ENCODE measurements at regions of chr1 and their contacts with region 1.

Region 1: DNA sequence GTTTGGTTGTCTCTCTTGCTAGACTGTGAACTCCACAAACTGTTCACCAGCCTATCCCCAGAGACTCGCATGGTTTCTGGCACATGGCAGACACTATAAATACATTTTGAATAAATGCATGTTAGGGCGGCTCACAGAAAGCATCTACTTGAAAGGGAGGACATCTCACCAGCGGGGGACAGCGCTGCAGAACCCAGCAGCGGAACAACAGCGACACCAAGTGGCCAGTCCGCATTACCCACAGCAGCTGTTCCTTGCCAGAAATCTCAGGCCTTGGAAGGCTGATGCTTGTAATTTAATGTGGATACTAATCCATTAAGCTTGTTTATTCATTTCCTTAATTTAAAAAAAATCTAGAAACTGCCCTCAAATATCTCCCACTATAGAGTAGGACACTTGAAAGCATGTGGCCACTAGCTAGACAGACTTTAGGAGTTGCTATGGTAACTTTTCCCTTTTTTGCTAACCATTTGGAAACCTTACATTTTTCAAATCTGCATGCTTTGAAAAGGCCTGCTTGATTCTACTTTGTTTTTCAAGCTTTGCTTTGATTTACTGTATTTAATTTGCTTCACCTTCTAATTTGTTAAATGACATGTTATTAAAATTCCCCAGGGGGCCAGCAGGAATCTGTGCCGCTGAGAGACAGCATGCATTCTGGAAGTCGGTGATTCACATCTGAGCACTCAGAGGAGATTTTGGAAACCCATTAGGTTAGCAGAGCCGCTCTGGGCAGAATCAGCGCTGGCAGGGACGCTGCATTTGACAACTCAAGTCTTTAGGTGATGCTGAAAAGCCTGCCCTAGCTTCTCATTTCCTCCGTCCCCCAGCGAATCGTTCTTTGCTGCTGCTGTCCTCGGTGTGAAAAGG is 63.5 kb upstream of the SSX2IP start:
- DNase-seq: peak; percentile 57
- H3K4me3 Mint-ChIP-seq: no peak overlapping the region
- H3K27ac Mint-ChIP-seq: no peak overlapping the region
- H3K4me1 Mint-ChIP-seq: peaks cover 5% of the 10 kb centered on the region
- H3K27me3 Mint-ChIP-seq: peaks cover 26% of the 10 kb centered on the region

Region 2: DNA sequence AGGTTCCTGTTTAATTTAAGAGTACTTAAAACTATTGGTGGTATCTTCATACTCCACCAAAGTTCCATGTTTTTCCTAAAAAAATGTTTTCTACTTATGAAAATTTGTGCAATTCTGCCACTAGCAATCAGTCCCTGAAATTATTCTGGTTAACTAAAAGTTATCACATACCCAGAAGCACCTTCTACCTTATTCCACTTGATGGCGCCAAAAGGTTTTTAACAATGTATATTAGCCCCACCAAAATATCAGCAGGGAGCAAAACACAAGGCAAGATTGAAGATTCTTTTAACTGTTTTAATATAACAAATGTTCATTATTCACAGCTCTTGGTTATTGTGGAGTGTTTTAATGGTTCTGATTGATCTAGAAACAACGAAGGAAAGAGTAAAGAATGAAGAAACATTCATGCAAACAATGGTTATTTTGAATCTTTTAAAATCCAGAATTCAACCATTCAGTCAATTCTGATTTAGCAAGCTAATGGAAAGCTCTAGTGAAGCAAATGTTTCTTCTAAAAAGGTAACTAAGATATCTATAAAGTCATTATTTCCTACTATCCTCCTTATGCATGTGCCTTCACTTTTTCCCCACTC is 822.0 kb before region 1 on chr1:
- intact Hi-C with region 1: loop called (anchors 1 kb)
- DNase-seq: no peak
- H3K4me3 Mint-ChIP-seq: no peak overlapping the region
- H3K27ac Mint-ChIP-seq: no peak overlapping the region
- H3K4me1 Mint-ChIP-seq: no peaks in the 10 kb centered on the region
- H3K27me3 Mint-ChIP-seq: peaks cover 8% of the 10 kb centered on the region

Region 3: GRCh38 chr1:84442256-84442655 is 311.5 kb before region 1 on chr1:
- intact Hi-C with region 1: loop called (anchors 1 kb)
- DNase-seq: peak; percentile 13
- H3K4me3 Mint-ChIP-seq: no peak overlapping the region
- H3K27ac Mint-ChIP-seq: peak overlapping the region; percentile 73
- H3K4me1 Mint-ChIP-seq: peaks cover 23% of the 10 kb centered on the region
- H3K27me3 Mint-ChIP-seq: peaks cover 8% of the 10 kb centered on the region

Region 4: GRCh38 chr1:84668185-84668584 is 85.6 kb before region 1 on chr1:
- intact Hi-C with region 1: loop called (anchors 2 kb)
- DNase-seq: no peak
- H3K4me3 Mint-ChIP-seq: no peak overlapping the region
- H3K27ac Mint-ChIP-seq: no peak overlapping the region
- H3K4me1 Mint-ChIP-seq: peaks cover 8% of the 10 kb centered on the region
- H3K27me3 Mint-ChIP-seq: no peaks in the 10 kb centered on the region

Region 5: DNA sequence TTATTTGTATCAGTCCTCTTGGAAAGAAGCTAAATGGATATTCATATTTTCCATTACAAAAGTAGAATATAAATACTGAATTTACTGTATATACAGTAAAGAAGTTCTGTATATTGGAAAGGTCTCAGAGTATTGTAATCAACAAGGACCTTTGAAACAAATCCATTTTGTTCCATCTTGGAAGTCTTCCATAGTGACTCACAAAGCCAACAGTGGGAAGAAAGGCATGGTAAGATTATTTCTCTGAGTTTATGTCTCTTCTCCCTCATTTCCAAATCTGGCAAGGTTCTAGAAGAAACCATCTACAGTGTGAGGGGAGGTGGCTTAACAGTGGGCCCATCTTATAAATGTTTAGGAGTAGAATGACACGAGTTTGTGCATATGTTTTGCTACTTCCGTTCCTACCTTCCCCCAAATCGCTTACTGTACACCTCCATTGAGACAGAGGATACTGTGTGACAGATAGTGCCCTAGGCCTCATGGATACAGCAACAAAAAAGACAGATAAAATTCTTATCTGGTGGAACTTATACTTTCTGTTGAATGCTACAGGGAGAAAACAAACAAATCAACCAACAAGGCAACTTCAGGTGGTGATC is 41.4 kb before region 1 on chr1:
- intact Hi-C with region 1: no loop called
- DNase-seq: no peak
- H3K4me3 Mint-ChIP-seq: no peak overlapping the region
- H3K27ac Mint-ChIP-seq: no peak overlapping the region
- H3K4me1 Mint-ChIP-seq: no peaks in the 10 kb centered on the region
- H3K27me3 Mint-ChIP-seq: peaks cover 12% of the 10 kb centered on the region

Measured in activated T-helper 1 cell treated with anti-CD3 and anti-CD28 coated beads, Interleukin-12 subunit alpha, Interleukin-12 subunit beta, Interleukin-2, Interleukin-4 antibody, amounts not matched to agents 30 ng/mL and 10 ng/mL and 1 ng/mL, durations not matched to agents 14 hours and 24 hours and 36 hours (primary cell).